ENCODE measurements at regions of chr19 and their contacts with region 1.

Region 1: GRCh38 chr19:17183858-17184321 is 31.3 kb upstream of the USE1 start:
- DNase-seq: peak; percentile 76
- ATAC-seq: peak; percentile 68
- H3K4me3 Mint-ChIP-seq: peak overlapping the region; percentile 77
- H3K27ac Mint-ChIP-seq: peak overlapping the region; percentile 96
- H3K4me1 Mint-ChIP-seq: peaks cover 53% of the 10 kb centered on the region
- H3K27me3 Mint-ChIP-seq: no peaks in the 10 kb centered on the region

Region 2: DNA sequence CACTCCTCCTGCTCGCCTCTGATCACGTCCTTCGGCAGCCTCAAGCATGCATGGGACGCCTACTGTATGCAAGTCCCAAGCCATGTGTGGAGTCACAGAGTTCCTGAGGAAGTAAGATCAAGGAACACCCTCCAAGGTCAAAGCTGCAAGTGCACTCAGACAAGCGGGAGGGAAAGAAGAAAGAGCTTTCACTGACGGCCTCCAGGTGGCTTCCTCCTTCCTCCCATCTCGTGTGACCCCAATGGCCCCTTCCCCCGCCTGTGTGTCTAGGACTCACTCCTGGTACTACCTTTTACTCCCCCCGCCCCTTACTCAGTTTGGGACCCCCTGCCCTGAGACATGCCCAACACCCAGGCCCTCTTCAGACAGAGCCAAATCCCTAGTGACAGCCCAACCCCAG is 114.7 kb before region 1 on chr19:
- CTCF ChIA-PET with region 1: interaction called, 26 read pairs
- DNase-seq: no peak
- ATAC-seq: no peak
- H3K4me3 Mint-ChIP-seq: no peak overlapping the region
- H3K27ac Mint-ChIP-seq: no peak overlapping the region
- H3K4me1 Mint-ChIP-seq: peaks cover 46% of the 10 kb centered on the region
- H3K27me3 Mint-ChIP-seq: no peaks in the 10 kb centered on the region

Region 3: GRCh38 chr19:17075035-17075863 is 108.6 kb before region 1 on chr19 and contains the starts of genes HAUS8 and MYO9B:
- CTCF ChIA-PET with region 1: interaction called, 26 read pairs
- DNase-seq: peak; percentile 100
- ATAC-seq: peak; percentile 84
- H3K4me3 Mint-ChIP-seq: peak within 1 kb of the TSS; percentile 100
- H3K27ac Mint-ChIP-seq: peak within 1 kb of the TSS; percentile 97
- H3K4me1 Mint-ChIP-seq: peaks cover 58% of the 10 kb centered on the region
- H3K27me3 Mint-ChIP-seq: no peaks in the 10 kb centered on the region
- total RNA-seq, gene HAUS8: 62.1 to 73.0 TPM
- total RNA-seq, gene MYO9B: 280 to 356 TPM

Region 4: GRCh38 chr19:17125715-17126677 is 57.9 kb before region 1 on chr19:
- CTCF ChIA-PET with region 1: interaction called, 20 read pairs
- DNase-seq: peak; percentile 95
- ATAC-seq: peak; percentile 91
- H3K4me3 Mint-ChIP-seq: peak overlapping the region; percentile 78
- H3K27ac Mint-ChIP-seq: peak overlapping the region; percentile 99
- H3K4me1 Mint-ChIP-seq: peaks cover 76% of the 10 kb centered on the region
- H3K27me3 Mint-ChIP-seq: no peaks in the 10 kb centered on the region

Region 5: GRCh38 chr19:17159466-17160393 is 24.2 kb before region 1 on chr19:
- CTCF ChIA-PET with region 1: interaction called, 17 read pairs
- DNase-seq: no peak
- ATAC-seq: no peak
- H3K4me3 Mint-ChIP-seq: no peak overlapping the region
- H3K27ac Mint-ChIP-seq: peak overlapping the region; percentile 47
- H3K4me1 Mint-ChIP-seq: peaks cover 14% of the 10 kb centered on the region
- H3K27me3 Mint-ChIP-seq: no peaks in the 10 kb centered on the region

Region 6: DNA sequence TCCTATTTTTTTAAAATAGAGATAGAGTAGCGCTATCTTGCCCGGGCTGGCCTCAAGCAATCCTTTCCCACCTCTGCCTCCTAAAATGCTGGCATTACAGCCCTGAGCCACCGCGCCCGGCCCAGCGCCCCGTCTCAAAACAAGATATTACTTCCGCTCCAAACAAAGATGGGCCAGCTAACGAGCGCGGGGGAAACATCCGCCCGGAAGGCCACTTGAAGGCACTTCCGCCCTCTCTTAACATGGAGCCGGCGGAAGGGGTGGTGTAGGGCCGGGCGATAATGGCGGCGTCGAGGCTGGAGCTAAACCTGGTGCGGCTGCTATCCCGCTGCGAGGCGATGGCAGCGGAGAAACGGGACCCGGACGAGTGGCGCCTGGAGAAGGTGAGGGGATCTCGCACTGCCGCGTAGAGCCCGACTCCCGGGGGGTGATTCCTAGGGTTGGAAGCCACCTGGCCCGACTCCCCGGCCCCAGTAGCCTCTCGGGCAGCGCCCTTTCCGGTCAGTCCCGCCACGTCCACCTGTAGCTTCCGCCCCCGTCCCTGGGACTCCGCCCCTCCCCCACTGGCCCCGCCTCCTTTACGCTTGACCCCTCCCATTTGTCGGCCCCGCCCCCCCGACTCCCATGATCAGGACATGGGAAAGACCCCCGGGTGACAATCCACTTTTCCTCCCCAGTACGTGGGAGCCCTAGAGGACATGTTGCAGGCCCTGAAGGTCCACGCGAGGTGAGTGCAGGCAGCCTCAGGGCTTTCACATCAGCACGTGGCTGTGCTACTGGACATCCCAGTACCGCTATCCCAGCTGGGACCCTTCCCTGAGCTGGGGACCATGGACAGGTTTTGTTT is 31.5 kb after region 1 on chr19 and contains the start of gene USE1:
- CTCF ChIA-PET with region 1: interaction called, 10 read pairs
- DNase-seq: peak; percentile 94
- ATAC-seq: peak; percentile 97
- H3K4me3 Mint-ChIP-seq: peak within 1 kb of the TSS; percentile 76
- H3K27ac Mint-ChIP-seq: peak within 1 kb of the TSS; percentile 94
- H3K4me1 Mint-ChIP-seq: peaks cover 15% of the 10 kb centered on the region
- H3K27me3 Mint-ChIP-seq: no peaks in the 10 kb centered on the region
- total RNA-seq, gene USE1: 22.1 to 23.6 TPM

Region 7: DNA sequence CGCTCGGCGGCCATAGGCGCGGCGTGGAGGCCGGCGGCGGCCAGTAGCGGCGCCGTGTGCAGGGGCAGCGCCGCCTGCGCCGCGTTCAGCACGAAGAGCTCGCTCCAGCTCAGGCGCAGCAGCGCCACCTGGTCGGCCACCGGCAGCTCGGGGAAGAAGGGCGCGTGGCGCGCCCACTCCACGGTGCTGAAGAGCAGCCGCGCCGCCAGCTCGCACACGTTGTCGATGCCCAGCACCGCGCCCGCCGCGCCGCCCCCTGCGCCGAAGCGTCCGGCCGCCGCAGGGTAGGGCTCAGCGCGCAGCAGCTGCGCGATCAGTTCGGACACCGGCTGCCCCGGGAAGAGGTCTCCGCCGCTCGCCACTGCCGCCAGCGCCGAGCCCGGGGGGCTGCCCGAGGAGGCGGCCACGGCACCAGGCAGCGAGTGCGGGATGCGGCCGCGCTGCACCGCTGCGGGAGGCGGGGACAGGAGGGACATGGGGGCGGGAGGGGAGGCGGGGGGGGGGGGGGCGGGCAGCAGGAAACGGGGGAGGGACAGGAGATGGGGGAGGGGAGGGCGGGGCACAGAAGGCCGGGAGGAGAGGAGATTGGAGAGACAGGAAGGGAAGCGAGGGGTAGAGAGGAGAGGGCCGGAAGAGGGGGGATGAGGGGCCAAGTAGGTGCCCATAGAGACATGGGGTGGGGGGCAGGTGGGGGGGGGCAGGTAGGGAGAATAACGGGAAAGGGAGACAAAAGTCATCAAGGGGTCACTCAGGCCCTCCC is 51.9 kb after region 1 on chr19:
- CTCF ChIA-PET with region 1: interaction called, 14 read pairs
- DNase-seq: peak; percentile 81
- ATAC-seq: peak; percentile 93
- H3K4me3 Mint-ChIP-seq: peak overlapping the region; percentile 70
- H3K27ac Mint-ChIP-seq: peak overlapping the region; percentile 66
- H3K4me1 Mint-ChIP-seq: peaks cover 5% of the 10 kb centered on the region
- H3K27me3 Mint-ChIP-seq: no peaks in the 10 kb centered on the region

Measured in activated CD8-positive, alpha-beta memory T cell treated with anti-CD3 and anti-CD28 coated beads, Interleukin-2, amount 10 ng/mL, durations not matched to agents 7 days and 5 days (primary cell).